Heart right ventricle (tissue), 16 donors: ENCODE measurements at regions of chr5 and their contacts with region 1.

Region 1: GRCh38 chr5:60805470-60805869 is 38.6 kb downstream of the ELOVL7 start:
- DNase-seq: no peak
- ATAC-seq: no peak
- H3K4me3 ChIP-seq: no peak overlapping the region
- H3K27ac ChIP-seq: no peak overlapping the region
- H3K4me1 ChIP-seq: no peaks in the 10 kb centered on the region
- H3K27me3 ChIP-seq: no peaks in the 10 kb centered on the region
- CTCF ChIP-seq: no peak

Region 2: GRCh38 chr5:59666440-59667068 is 1138.9 kb before region 1 on chr5:
- intact Hi-C with region 1: loop called in 1 of 10 experiments (anchors 5 kb)
- DNase-seq: no peak
- ATAC-seq: no peak
- H3K4me3 ChIP-seq: no peak overlapping the region
- H3K27ac ChIP-seq: no peak overlapping the region
- H3K4me1 ChIP-seq: peaks cover 0 to 12% (median 4%) of the 10 kb centered on the region in 9 donors
- H3K27me3 ChIP-seq: no peaks in the 10 kb centered on the region
- CTCF ChIP-seq: no peak

Region 3: GRCh38 chr5:60743467-60744314 is 61.8 kb before region 1 on chr5:
- intact Hi-C with region 1: loop called in 1 of 10 experiments (anchors 10 kb)
- DNase-seq: no peak
- ATAC-seq: no peak
- H3K4me3 ChIP-seq: no peak overlapping the region
- H3K27ac ChIP-seq: no peak overlapping the region
- H3K4me1 ChIP-seq: no peaks in the 10 kb centered on the region
- H3K27me3 ChIP-seq: no peaks in the 10 kb centered on the region
- CTCF ChIP-seq: no peak